ENCODE measurements at regions of chr16 and their contacts with region 1.

Region 1: DNA sequence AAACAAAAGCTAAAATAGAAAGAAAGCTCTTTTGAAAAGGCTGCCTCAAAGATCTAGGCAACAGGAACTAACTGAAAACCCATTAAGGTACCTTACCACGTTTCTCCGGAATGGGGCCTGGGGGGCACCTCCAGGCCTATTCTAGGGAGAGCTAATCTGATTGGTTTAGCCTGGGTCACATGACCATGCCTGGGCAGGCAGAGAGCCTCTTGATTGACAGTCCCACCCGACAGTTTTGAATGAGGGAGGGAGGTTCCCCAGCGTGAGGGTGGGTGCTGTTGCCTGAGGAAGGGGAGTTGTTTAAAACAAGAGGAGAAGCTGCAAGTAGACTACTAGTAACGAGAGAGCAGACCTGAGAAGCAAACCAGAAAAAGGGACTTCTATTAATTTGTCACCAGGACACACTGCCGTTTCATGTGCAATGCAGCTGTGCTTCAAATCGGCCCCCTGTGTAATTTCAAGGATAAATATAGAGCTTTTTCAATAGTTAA is 143.4 kb upstream of the HS3ST2 start:
- DNase-seq: no peak
- H3K4me3 ChIP-seq: no peak overlapping the region
- H3K27ac ChIP-seq: no peak overlapping the region
- H3K4me1 ChIP-seq: no peaks in the 10 kb centered on the region
- H3K27me3 ChIP-seq: no peaks in the 10 kb centered on the region
- CTCF ChIP-seq: no peak
- POLR2A ChIP-seq: no peak

Region 2: DNA sequence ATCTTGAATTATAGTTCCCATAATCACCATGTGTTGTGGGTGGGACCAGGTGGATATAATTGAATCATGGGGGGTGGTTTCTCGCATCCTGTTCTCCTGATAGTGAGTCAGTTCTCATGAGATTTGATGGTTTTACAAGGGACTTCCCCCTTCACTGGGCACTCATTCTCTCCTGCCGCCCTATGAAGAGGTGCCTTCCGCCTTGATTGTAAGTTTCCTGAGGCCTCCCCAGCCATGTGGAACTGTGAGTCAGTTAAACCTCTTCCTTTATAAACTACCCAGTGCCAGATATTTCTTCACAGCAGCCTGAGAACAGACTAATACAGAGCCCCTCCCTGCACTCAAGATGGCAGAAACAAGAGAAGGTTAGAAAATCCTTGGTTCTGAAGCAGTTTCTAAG is 1485.8 kb before region 1 on chr16:
- intact Hi-C with region 1: loop called (anchors 10 kb)
- DNase-seq: no peak
- H3K4me3 ChIP-seq: no peak overlapping the region
- H3K27ac ChIP-seq: no peak overlapping the region
- H3K4me1 ChIP-seq: no peaks in the 10 kb centered on the region
- H3K27me3 ChIP-seq: no peaks in the 10 kb centered on the region
- CTCF ChIP-seq: no peak
- POLR2A ChIP-seq: no peak

Region 3: DNA sequence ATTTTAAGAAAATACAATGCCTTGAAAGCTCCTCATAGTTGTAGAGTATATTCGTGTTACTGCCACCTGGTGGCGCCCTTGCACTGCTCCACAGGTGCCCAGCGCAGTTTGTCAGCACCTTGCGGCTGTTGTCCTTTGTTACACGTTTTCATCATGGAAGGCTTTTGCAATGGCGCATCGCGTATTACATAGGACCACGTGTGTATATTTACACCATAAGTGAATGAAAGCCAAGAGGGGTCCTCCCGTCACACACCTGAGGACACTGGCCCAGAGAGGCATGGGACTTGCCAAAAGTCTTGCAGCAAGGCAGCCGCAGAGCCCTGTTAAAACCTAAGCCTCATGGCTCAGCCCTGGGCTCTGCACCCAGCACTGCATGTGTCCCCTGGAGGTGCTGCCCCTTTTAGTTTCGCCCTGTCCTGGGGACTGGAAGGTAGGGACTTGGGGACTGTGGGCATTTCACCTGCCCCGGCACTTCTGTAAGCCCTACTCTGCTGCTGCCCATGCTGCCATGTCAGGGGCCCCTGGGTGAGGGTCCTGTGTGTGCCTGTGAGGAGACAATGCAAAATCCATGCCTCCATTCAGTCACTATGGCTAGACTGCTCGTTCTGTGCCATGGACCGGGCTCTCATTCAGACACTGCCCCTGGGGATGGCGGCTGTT is 349.1 kb before region 1 on chr16:
- intact Hi-C with region 1: loop called (anchors 10 kb)
- DNase-seq: peak; percentile 77
- H3K4me3 ChIP-seq: no peak overlapping the region
- H3K27ac ChIP-seq: no peak overlapping the region
- H3K4me1 ChIP-seq: no peaks in the 10 kb centered on the region
- H3K27me3 ChIP-seq: no peaks in the 10 kb centered on the region
- CTCF ChIP-seq: peak; percentile 73 to 93 (median 92)
- POLR2A ChIP-seq: no peak

Region 4: DNA sequence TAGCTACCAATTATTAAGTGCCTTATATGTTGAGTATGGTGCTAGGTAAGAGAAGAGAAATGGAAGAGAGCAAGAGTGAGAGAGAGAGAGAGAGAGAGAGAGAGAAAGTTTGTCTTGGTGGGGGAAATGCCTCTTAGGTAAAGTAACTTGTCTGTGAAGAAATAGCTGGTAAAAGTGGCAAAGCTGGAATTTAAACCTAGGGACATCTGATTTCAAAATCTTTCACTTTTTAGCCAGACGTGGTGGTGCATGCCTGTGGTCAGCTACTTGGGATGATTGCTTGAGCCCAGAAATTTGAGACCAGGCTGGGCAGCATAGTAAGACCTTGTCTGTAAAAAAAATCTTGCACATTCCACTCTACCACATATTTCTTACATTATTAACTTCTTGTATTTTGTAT is 273.1 kb before region 1 on chr16:
- intact Hi-C with region 1: loop called (anchors 10 kb)
- DNase-seq: no peak
- H3K4me3 ChIP-seq: no peak overlapping the region
- H3K27ac ChIP-seq: no peak overlapping the region
- H3K4me1 ChIP-seq: no peaks in the 10 kb centered on the region
- H3K27me3 ChIP-seq: no peaks in the 10 kb centered on the region
- CTCF ChIP-seq: no peak
- POLR2A ChIP-seq: no peak

Region 5: DNA sequence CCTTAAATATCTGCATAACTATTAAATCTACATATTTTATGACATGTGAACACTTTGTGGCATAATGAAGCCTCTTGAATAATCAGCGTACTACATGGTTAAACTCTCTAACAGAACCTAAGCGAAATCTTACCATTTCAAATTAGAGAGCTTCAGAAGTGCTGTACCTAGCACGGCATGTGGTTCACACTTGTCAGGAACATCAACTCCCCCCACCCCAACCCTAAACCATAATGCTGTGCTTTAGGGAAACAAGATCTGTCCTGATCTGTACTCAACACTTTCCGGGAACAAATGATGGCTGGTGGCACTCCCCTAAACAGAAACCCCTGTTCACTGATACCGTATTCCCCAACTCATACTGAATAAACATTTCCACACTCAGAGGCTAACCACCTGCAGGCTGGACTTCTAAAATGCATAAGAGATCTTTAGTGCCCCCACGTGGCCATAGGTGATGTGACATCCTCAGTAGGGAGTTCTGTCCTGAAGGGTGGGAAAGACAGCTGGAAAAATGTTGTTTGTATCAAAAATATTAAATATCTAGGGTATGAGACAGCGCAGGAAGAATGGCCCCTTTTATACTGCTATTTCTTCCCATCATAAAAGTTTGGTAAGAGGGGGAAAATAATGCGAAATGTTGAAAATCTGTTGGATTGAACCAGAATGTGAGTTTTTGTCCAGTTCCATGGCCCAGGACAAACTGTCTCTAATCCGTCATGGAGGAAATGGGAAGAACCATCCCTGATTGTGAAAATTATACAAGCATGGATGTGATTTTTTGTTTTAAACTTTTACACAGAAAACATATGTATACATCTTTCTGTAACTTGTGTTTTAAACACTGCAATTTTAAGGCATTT is 390.1 kb after region 1 on chr16:
- intact Hi-C with region 1: loop called (anchors 10 kb)
- DNase-seq: peak; percentile 67
- H3K4me3 ChIP-seq: no peak overlapping the region
- H3K27ac ChIP-seq: no peak overlapping the region
- H3K4me1 ChIP-seq: no peaks in the 10 kb centered on the region
- H3K27me3 ChIP-seq: no peaks in the 10 kb centered on the region
- CTCF ChIP-seq: peak in 3 of 4 experiments; percentile 70 to 71 (median 71)
- POLR2A ChIP-seq: no peak